ENCODE measurements at regions of chr6 and their contacts with region 1.

Region 1: GRCh38 chr6:11324453-11325015 is 92.1 kb upstream of the NEDD9 start:
- DNase-seq: peak; percentile 87
- H3K4me3 Mint-ChIP-seq: peak overlapping the region; percentile 78
- H3K27ac Mint-ChIP-seq: peak overlapping the region; percentile 97
- H3K4me1 Mint-ChIP-seq: peaks cover 75% of the 10 kb centered on the region
- H3K27me3 Mint-ChIP-seq: no peaks in the 10 kb centered on the region

Region 2: GRCh38 chr6:11172501-11173332 is 151.8 kb before region 1 on chr6:
- intact Hi-C with region 1: loop called (anchors 5 kb)
- DNase-seq: peak; percentile 92
- H3K4me3 Mint-ChIP-seq: peak overlapping the region; percentile 32
- H3K27ac Mint-ChIP-seq: peak overlapping the region; percentile 21
- H3K4me1 Mint-ChIP-seq: peaks cover 21% of the 10 kb centered on the region
- H3K27me3 Mint-ChIP-seq: no peaks in the 10 kb centered on the region

Region 3: GRCh38 chr6:11291582-11291981 is 33.0 kb before region 1 on chr6:
- intact Hi-C with region 1: loop called (anchors 1 kb)
- DNase-seq: no peak
- H3K4me3 Mint-ChIP-seq: no peak overlapping the region
- H3K27ac Mint-ChIP-seq: peak overlapping the region; percentile 66
- H3K4me1 Mint-ChIP-seq: peaks cover 13% of the 10 kb centered on the region
- H3K27me3 Mint-ChIP-seq: no peaks in the 10 kb centered on the region

Region 4: GRCh38 chr6:11353921-11354389 is 29.4 kb after region 1 on chr6:
- intact Hi-C with region 1: loop called (anchors 2 kb)
- DNase-seq: peak; percentile 87
- H3K4me3 Mint-ChIP-seq: peak overlapping the region; percentile 68
- H3K27ac Mint-ChIP-seq: peak overlapping the region; percentile 86
- H3K4me1 Mint-ChIP-seq: peaks cover 73% of the 10 kb centered on the region
- H3K27me3 Mint-ChIP-seq: no peaks in the 10 kb centered on the region

Region 5: GRCh38 chr6:11414176-11414963 is 89.8 kb after region 1 on chr6:
- intact Hi-C with region 1: loop called (anchors 2 kb)
- DNase-seq: peak; percentile 78
- H3K4me3 Mint-ChIP-seq: no peak overlapping the region
- H3K27ac Mint-ChIP-seq: peak overlapping the region; percentile 41
- H3K4me1 Mint-ChIP-seq: peaks cover 44% of the 10 kb centered on the region
- H3K27me3 Mint-ChIP-seq: no peaks in the 10 kb centered on the region

Region 6: GRCh38 chr6:11496152-11497060 is 171.9 kb after region 1 on chr6:
- intact Hi-C with region 1: loop called (anchors 5 kb)
- DNase-seq: peak; percentile 93
- H3K4me3 Mint-ChIP-seq: no peak overlapping the region
- H3K27ac Mint-ChIP-seq: no peak overlapping the region
- H3K4me1 Mint-ChIP-seq: peaks cover 10% of the 10 kb centered on the region
- H3K27me3 Mint-ChIP-seq: no peaks in the 10 kb centered on the region

Measured in activated CD4-positive, alpha-beta T cell treated with anti-CD3 and anti-CD28 coated beads, Interleukin-2, amount 10 ng/mL, durations not matched to agents 24 days and 14 days (primary cell).